Posterior vena cava (tissue), 2 donors: ENCODE measurements at regions of chr10 and their contacts with region 1.

Region 1: GRCh38 chr10:49164559-49165188 is 23.5 kb downstream of the TMEM273 start:
- DNase-seq: no peak

Region 2: GRCh38 chr10:48976196-48976595 is 188.5 kb before region 1 on chr10:
- intact Hi-C with region 1: loop called (anchors 2 to 5 kb)
- DNase-seq: no peak

Region 3: DNA sequence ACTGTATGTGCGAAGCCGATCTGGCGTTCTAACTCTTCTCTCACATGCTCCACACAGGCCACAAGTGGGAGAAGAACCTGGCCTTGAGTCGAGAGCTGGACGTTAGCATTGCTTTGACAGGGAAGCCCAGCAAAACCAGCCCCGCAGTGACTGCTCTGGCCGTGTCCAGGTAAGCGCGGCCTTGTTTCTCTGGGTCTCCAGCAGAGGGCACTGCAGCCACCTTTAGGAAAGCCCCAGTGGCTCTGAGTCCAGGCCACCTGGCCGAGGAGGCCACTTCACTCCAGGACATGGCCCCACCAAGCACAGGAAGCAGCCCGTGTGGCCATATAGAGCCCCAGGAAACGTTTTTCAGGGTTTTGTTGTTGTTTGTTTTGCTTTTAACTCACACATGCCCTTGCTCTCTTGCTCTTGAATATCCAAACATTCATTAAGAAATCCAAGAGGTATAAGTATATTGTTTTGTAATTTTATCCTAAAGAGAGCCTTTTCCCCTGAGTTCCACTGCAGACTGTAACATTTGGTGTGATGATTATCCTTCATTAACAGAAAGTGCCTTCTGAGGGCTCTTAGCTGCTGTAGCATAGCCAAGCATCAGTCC is 183.3 kb before region 1 on chr10:
- intact Hi-C with region 1: loop called (anchors 2 to 5 kb)
- DNase-seq: no peak

Region 4: GRCh38 chr10:49115015-49115795 is 49.5 kb before region 1 on chr10 and contains the start of gene VSTM4:
- intact Hi-C with region 1: loop called in 1 of 2 experiments (anchors 2 kb)
- DNase-seq: no peak
- total RNA-seq, gene VSTM4: 14.9 to 20.2 TPM